ENCODE measurements at regions of chr17 and their contacts with region 1.

Region 1: DNA sequence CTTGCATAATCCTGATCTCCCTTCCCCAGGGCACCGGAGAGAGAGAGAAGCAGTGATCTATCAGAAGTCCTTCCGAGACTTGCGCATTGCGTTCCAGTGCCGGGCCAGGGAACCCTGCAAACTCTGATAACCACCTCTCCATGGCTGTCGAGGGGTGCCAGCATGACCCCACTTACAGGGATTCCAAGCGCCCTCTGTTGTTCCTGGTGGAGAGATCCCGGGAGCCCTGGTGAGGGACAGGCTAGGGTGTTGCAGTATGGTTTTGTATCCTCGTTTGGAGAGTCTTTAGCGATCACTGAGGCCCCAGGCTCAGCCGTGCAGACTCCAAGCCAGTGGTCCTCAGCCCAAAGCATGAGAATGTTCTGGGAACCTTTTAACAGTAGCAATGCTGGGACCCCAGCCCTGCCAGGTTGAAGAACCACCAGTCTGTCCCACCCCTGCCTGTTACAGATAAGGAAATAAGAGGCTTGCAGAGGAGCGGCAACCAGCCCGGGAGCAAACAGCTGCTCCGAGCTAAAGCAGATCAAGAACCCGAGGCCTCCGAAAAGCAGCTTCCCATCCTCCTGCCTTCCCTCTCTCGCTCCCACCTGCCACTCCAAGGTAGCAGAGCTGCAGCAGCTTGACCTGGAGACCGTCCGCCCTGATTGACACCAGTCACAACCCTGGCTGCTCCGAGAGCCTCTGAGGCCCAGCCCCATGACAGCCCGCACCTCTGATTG is 150.3 kb upstream of the RPL38 start:
- DNase-seq: no peak
- H3K4me3 ChIP-seq: no peak overlapping the region
- H3K27ac ChIP-seq: no peak overlapping the region
- H3K4me1 ChIP-seq: peaks cover 0 to 8% (median 2%) of the 10 kb centered on the region in 4 experiments; a peak in 5 of 7 replicates
- H3K27me3 ChIP-seq: no peaks in the 10 kb centered on the region; a peak in 3 of 7 replicates
- CTCF ChIP-seq: peak; percentile 9 to 32 (median 24)
- EP300 ChIP-seq: no peak
- POLR2A ChIP-seq: no peak
- RAD21 ChIP-seq: peak; percentile 26 to 51

Region 2: GRCh38 chr17:74070374-74070773 is 17.2 kb after region 1 on chr17:
- CTCF ChIA-PET with region 1: interaction called, 11 read pairs
- POLR2A ChIA-PET with region 1: no interaction called
- DNase-seq: no peak
- H3K4me3 ChIP-seq: no peak overlapping the region
- H3K27ac ChIP-seq: no peak overlapping the region
- H3K4me1 ChIP-seq: no peaks in the 10 kb centered on the region
- H3K27me3 ChIP-seq: no peaks in the 10 kb centered on the region
- CTCF ChIP-seq: peak in 2 of 3 experiments; percentile 25 to 49; a peak in 2 of 4 replicates
- EP300 ChIP-seq: no peak
- POLR2A ChIP-seq: no peak
- RAD21 ChIP-seq: peak; percentile 39 to 61

Region 3: GRCh38 chr17:74152591-74153455 is 99.7 kb after region 1 on chr17:
- CTCF ChIA-PET with region 1: no interaction called
- POLR2A ChIA-PET with region 1: no interaction called
- DNase-seq: peak in 1 of 2 experiments; percentile 35
- H3K4me3 ChIP-seq: no peak overlapping the region
- H3K27ac ChIP-seq: no peak overlapping the region
- H3K4me1 ChIP-seq: peaks cover 0 to 9% (median 2%) of the 10 kb centered on the region in 4 experiments; a peak in 1 of 7 replicates
- H3K27me3 ChIP-seq: 0 out of 7 replicates have a peak, but pooled peaks cover 0 to 3% (median 0%) of the 10 kb centered on the region in 4 experiments
- CTCF ChIP-seq: no peak
- EP300 ChIP-seq: no peak
- POLR2A ChIP-seq: no peak
- RAD21 ChIP-seq: no peak